SK-N-SH (cell line): ENCODE measurements at regions of chr18 and their contacts with region 1.

Region 1: GRCh38 chr18:13558124-13558523 is 168.2 kb downstream of the FAM210A start:
- DNase-seq: peak; percentile 83
- H3K4me3 ChIP-seq: peak overlapping the region in 1 of 2 experiments; percentile 11; a peak in 1 of 4 replicates
- H3K27ac ChIP-seq: no peak overlapping the region
- H3K4me1 ChIP-seq: peaks cover 0 to 6% of the 10 kb centered on the region in 2 experiments; a peak in 1 of 4 replicates
- H3K27me3 ChIP-seq: no peaks in the 10 kb centered on the region
- CTCF ChIP-seq: peak; percentile 68
- EP300 ChIP-seq: no peak
- RAD21 ChIP-seq: peak; percentile 89

Region 2: DNA sequence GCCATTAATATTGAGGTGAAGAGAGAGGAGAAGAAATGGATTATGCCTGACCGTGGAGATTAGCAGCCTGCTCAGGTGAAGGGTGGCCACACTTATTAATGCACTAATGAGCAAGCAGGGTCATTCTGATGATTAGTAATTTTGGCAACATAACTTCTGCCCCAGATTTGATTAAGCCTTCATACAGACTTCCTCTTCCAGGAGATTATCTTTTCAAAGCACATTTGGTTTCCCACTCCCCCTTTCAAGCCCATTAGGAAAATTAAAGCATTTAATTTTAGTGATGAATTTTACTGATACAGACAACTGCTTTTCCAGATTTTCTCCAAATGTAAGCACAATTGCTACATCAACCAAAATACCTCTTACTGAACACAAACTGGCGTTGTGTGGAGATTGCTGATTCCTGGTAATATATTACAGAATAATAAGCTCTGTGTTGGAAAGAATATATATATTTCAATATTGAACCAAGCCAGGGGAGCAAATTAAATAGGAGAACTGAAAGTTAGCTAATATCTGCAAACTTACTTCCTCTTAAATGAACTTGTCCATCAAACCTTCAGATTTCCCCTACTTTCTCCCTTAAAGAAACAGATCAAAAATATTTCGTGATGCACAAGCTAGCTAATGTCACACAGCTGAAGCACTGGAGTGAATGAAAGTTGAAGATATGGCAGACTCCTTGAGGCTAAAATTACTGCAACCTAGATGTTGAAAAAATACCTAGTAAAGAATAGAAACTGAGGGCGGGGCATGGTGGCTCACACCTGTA is 27.4 kb after region 1 on chr18:
- CTCF ChIA-PET with region 1: interaction called, 24 read pairs
- POLR2A ChIA-PET with region 1: interaction called, 3 read pairs
- DNase-seq: peak; percentile 63
- H3K4me3 ChIP-seq: no peak overlapping the region
- H3K27ac ChIP-seq: peak overlapping the region in 1 of 2 experiments; percentile 94; a peak in 2 of 4 replicates
- H3K4me1 ChIP-seq: peaks cover 0 to 41% of the 10 kb centered on the region in 2 experiments; a peak in 2 of 4 replicates
- H3K27me3 ChIP-seq: no peaks in the 10 kb centered on the region
- CTCF ChIP-seq: no peak
- EP300 ChIP-seq: peak in 1 of 2 experiments; percentile 71; a peak in 2 of 4 replicates
- RAD21 ChIP-seq: no peak